ENCODE measurements at regions of chr2 and their contacts with region 1.

Region 1: GRCh38 chr2:72077702-72078169 is 69.9 kb downstream of the CYP26B1 start:
- DNase-seq: no peak
- ATAC-seq: no peak
- H3K4me3 ChIP-seq: no peak overlapping the region
- H3K27ac ChIP-seq: no peak overlapping the region
- H3K4me1 ChIP-seq: no peaks in the 10 kb centered on the region
- H3K27me3 ChIP-seq: no peaks in the 10 kb centered on the region
- CTCF ChIP-seq: no peak
- POLR2A ChIP-seq: no peak
- RAD21 ChIP-seq: no peak

Region 2: DNA sequence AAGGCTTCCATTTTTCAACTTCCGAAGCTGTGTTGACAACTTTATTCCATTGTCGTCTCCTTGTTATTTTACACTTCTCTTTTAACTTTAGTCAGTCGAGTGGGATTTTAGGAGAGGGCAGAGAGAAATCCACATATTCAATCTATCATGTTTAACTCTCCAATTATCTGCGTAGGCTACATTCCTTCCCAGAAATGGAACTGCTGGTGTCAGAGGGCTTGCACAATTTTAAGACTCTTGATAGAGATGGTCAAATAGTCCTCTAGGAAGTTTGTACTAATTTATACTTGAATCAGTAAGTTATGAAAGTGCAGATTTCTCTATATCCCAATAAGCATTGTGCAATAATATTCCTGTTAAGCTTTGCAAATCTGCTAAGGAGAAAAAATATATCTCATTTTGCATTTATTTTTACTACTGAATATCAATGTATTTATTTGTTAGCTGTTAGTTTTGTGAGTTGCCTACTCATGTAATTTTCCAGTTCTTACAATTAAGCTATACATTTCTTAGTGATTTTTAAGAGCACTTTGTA is 25.7 kb before region 1 on chr2:
- CTCF ChIA-PET with region 1: no interaction called
- POLR2A ChIA-PET with region 1: interaction called, 10 read pairs
- RAD21 ChIA-PET with region 1: no interaction called
- intact Hi-C with region 1: no loop called
- DNase-seq: no peak
- ATAC-seq: no peak
- H3K4me3 ChIP-seq: no peak overlapping the region
- H3K27ac ChIP-seq: no peak overlapping the region
- H3K4me1 ChIP-seq: no peaks in the 10 kb centered on the region
- H3K27me3 ChIP-seq: no peaks in the 10 kb centered on the region
- CTCF ChIP-seq: no peak
- POLR2A ChIP-seq: no peak
- RAD21 ChIP-seq: no peak